ENCODE measurements at regions of chr17 and their contacts with region 1.

Region 1: DNA sequence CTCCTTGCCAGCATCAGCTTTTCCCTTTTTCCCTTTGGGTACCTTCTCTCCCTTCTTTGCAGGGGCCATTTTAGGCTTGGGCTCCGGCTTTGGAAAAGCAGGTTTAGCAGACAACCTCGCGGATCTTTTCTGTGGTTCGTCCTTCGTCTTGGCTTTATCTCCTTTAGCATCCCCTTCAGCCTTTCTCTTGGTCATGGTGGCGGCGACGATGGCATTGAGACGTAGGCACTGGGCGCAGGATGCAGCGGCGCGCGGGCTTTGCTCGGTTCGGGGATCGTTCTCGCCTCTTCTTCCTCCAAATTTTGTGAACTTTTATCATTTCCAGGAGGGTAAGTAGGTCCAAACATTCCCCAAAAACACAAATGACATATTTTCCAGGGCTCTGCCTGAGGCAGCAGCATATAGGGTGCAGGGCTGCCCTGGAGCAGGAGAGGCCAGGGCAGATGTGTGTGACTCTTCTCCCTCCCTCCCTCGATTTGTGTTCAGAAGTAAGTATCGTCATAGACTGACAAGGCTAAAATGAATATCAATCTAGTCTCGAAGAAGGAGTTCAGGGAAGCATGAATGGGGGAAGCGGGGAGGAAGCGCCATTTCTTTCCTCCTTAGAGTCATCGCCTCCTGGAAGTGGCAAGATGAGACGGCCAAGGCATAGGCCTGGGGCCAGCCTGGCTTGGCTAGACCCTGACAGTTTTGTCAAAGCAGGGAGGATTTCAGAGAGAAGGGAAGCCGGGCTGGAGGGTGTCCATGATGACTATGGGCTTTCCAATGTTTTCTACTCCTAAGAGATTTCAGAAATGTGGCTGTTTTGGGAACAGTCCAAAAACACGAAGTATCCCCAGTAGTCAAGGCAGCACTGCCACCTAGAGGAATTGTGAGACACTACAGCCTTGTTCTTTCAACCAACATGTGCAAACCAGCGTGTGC is 13.2 kb downstream of the CHCT1 start:
- DNase-seq: peak; percentile 85
- H3K4me3 ChIP-seq: no peak overlapping the region
- H3K27ac ChIP-seq: peak overlapping the region in 1 of 4 donors; percentile 7
- H3K4me1 ChIP-seq: peaks cover 0 to 5% (median 0%) of the 10 kb centered on the region in 4 donors
- H3K27me3 ChIP-seq: no peaks in the 10 kb centered on the region
- CTCF ChIP-seq: peak; percentile 84 to 95 (median 90)
- EP300 ChIP-seq: no peak
- POLR2A ChIP-seq: no peak

Region 2: GRCh38 chr17:60135151-60135950 is 300.2 kb before region 1 on chr17:
- intact Hi-C with region 1: loop called (anchors 10 kb)
- DNase-seq: peak; percentile 93
- H3K4me3 ChIP-seq: peak overlapping the region; percentile 49 to 70 (median 59)
- H3K27ac ChIP-seq: peak overlapping the region; percentile 71 to 79 (median 77)
- H3K4me1 ChIP-seq: peaks cover 0 to 34% (median 23%) of the 10 kb centered on the region in 4 donors
- H3K27me3 ChIP-seq: peaks cover 15 to 29% (median 23%) of the 10 kb centered on the region in 3 donors
- CTCF ChIP-seq: no peak
- EP300 ChIP-seq: no peak
- POLR2A ChIP-seq: peak; percentile 14 to 15

Region 3: DNA sequence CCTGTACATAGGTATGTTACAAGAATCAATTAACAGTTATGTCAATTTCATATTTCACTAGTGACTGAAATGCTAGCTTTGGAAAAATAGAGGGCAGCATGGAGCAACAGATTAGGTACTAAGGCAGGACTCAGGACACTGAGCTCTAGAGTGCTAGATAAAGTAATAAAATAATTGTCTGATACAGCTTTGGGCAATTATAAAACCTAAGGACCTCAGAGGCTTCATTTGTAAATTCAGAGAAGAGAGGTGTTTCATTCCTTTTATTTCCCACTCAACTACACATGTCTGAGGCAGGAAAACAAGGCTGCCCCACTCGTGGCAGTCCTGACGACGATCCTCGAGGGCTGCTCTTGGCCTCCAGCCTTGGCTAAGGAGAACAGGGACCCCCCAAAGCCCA is 204.3 kb before region 1 on chr17:
- intact Hi-C with region 1: loop called (anchors 5 kb)
- DNase-seq: no peak
- H3K4me3 ChIP-seq: no peak overlapping the region
- H3K27ac ChIP-seq: no peak overlapping the region
- H3K4me1 ChIP-seq: no peaks in the 10 kb centered on the region
- H3K27me3 ChIP-seq: no peaks in the 10 kb centered on the region
- CTCF ChIP-seq: peak in 1 of 4 experiments; percentile 14
- EP300 ChIP-seq: no peak
- POLR2A ChIP-seq: peak in 1 of 2 donors; percentile 10

Region 4: DNA sequence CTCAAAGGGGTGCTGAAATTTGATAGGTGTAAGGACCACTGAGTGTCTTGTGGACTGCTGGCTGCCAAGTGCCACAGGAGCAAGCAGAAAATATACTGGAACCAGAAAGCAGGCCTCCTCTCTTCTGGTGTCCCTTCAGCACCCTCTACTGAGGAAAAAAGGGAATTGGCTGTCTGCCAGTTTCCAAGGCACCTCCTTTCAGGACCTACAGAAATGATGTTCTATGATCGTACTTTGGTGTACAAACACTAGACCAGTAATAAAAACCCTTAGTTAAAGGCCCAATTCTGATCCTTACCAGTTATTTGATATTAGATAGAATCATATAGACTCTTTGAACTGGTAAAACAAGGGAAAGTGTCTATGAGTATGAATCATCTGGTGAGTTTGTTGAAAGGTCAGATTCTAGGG is 206.3 kb after region 1 on chr17:
- intact Hi-C with region 1: loop called (anchors 10 kb)
- DNase-seq: peak; percentile 78
- H3K4me3 ChIP-seq: no peak overlapping the region
- H3K27ac ChIP-seq: no peak overlapping the region
- H3K4me1 ChIP-seq: peaks cover 0 to 22% (median 9%) of the 10 kb centered on the region in 4 donors
- H3K27me3 ChIP-seq: no peaks in the 10 kb centered on the region
- CTCF ChIP-seq: peak in 3 of 4 experiments; percentile 24 to 44 (median 32)
- EP300 ChIP-seq: no peak
- POLR2A ChIP-seq: no peak

Measured in sigmoid colon (tissue), 7 donors.